ENCODE measurements at regions of chr17 and their contacts with region 1.

Region 1: DNA sequence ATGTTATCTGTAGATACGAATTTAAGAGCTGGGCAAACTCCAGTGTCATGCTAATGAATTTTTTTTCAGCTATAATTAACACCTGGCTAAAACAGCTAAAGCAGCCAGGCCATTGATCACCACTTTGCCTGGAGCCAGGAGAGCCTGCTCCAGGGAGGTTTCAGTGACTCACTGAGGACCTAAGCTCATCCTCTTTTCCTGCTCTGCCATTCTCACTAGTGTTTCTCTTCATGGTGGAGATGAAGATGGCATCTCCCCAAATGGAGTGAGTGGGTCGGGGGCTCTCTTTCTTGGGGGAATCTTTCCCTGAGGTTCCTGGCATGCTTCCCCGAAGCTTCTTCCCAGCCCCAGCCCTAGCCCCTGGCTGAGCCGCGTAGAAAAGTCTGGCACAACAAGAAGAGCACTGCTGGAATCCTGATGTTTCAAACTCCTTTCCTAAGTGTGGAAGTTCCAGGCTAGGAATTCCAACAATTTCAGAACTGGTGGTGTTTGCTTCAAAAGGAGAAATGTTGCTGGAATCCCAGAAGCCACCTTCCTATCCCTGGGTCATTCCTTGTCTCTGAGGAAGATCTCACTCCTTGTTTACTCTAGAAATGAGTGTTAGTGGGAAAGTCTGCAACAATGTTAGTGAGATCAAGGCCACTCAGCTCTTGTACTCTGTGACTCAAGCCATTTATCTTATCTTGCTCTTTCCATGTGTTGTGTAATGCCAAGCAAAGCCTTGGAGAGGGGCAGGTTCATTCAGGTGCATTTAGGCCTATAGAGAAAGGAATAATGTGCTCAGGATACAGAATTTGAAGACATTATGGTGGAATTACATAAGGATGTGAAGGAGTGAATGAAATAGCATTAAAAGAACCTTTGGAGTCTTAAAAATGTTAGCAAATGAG is 26.0 kb upstream of the B4GALNT2 start:
- DNase-seq: peak; percentile 85 to 88
- H3K4me3 ChIP-seq: no peak overlapping the region
- H3K4me3 Mint-ChIP-seq: peak overlapping the region; percentile 42
- H3K27ac Mint-ChIP-seq: peak overlapping the region; percentile 24
- H3K4me1 ChIP-seq: peaks cover 52% of the 10 kb centered on the region
- H3K4me1 Mint-ChIP-seq: peaks cover 38% of the 10 kb centered on the region
- H3K27me3 ChIP-seq: no peaks in the 10 kb centered on the region
- H3K27me3 Mint-ChIP-seq: no peaks in the 10 kb centered on the region
- CTCF ChIP-seq: no peak

Region 2: DNA sequence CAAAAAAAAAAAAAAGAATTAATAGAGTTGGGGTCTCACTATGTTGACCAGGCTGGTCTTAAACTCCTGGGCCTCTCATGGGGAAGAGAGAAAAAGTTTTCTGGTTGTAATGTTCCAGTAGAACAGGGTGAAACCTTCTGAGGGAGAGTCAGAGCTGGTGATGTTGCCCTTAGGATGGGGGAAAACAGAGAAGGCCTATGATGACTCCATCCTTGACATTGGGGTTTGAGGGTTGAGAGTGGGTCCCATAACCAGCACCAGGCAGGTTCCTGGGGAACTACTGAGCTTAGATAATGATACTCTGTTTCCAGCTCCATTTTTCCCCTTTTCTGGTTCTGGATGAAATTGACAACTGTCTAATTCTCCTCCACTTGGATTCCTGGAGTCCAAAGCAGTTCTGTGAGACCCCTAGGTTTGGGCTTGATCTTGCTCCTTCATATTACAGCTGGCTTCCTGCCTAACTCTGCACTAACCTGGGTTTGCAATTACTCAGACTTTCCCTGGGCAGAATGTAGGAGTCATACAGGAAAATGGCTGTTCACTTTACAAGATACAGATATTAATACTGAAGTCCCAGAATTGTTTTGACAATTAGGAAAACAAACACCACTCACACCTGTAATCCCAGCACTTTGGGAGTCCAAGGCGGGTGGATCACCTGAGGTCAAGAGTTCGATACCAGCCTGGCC is 36.8 kb before region 1 on chr17:
- CTCF ChIA-PET with region 1: no interaction called
- POLR2A ChIA-PET with region 1: no interaction called
- intact Hi-C with region 1: loop called (anchors 2 kb)
- DNase-seq: no peak
- H3K4me3 ChIP-seq: no peak overlapping the region
- H3K4me3 Mint-ChIP-seq: no peak overlapping the region
- H3K27ac Mint-ChIP-seq: no peak overlapping the region
- H3K4me1 ChIP-seq: peaks cover 23% of the 10 kb centered on the region
- H3K4me1 Mint-ChIP-seq: peaks cover 14% of the 10 kb centered on the region
- H3K27me3 ChIP-seq: no peaks in the 10 kb centered on the region
- H3K27me3 Mint-ChIP-seq: no peaks in the 10 kb centered on the region
- CTCF ChIP-seq: no peak

Region 3: DNA sequence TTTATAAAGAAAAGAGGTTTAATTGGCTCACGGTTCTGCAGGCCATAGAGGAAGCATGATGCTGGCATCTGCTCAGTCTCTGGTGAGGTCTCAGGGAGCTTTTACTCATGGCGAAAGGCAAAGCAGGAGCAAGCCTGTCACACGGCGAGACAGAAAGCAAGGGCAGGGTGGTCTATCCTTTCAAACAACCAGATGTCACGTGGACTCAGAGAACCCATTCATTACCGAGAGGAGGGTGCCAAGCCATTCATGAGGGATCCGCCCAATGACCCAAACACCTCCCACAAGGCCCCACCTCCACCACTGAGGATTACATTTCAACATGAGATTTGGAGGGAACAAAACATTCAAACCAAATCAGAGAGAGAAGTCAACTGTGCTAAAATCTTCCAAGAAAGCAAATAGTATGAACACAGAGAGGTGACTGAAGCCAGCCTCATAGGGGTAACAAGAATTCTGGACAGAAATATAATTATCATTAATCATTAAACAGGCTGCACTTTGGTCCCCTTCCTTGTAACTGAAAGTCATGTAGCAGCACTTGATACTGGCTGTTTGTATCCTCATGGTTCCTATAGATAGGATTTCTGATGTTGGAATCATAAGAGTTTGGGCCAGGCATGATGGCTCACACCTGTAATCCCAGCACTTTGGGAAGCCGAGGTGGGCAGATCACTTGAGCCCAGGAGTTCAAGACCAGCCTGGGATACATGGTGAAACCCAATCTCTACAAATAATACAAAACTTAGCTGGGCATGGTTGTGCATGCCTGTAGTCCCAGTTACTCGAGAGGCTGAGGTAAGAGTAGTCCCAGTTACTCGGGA is 26.5 kb before region 1 on chr17:
- CTCF ChIA-PET with region 1: no interaction called
- POLR2A ChIA-PET with region 1: no interaction called
- intact Hi-C with region 1: loop called (anchors 2 kb)
- DNase-seq: no peak
- H3K4me3 ChIP-seq: no peak overlapping the region
- H3K4me3 Mint-ChIP-seq: no peak overlapping the region
- H3K27ac Mint-ChIP-seq: peak overlapping the region; percentile 10
- H3K4me1 ChIP-seq: peaks cover 19% of the 10 kb centered on the region
- H3K4me1 Mint-ChIP-seq: peaks cover 9% of the 10 kb centered on the region
- H3K27me3 ChIP-seq: no peaks in the 10 kb centered on the region
- H3K27me3 Mint-ChIP-seq: no peaks in the 10 kb centered on the region
- CTCF ChIP-seq: no peak

Region 4: GRCh38 chr17:49121696-49122292 is 15.2 kb after region 1 on chr17:
- CTCF ChIA-PET with region 1: no interaction called
- POLR2A ChIA-PET with region 1: no interaction called
- intact Hi-C with region 1: loop called (anchors 2 kb)
- DNase-seq: peak; percentile 40 to 69
- H3K4me3 ChIP-seq: no peak overlapping the region
- H3K4me3 Mint-ChIP-seq: no peak overlapping the region
- H3K27ac Mint-ChIP-seq: peak overlapping the region; percentile 3
- H3K4me1 ChIP-seq: peaks cover 11% of the 10 kb centered on the region
- H3K4me1 Mint-ChIP-seq: peaks cover 17% of the 10 kb centered on the region
- H3K27me3 ChIP-seq: no peaks in the 10 kb centered on the region
- H3K27me3 Mint-ChIP-seq: no peaks in the 10 kb centered on the region
- CTCF ChIP-seq: no peak

Region 5: DNA sequence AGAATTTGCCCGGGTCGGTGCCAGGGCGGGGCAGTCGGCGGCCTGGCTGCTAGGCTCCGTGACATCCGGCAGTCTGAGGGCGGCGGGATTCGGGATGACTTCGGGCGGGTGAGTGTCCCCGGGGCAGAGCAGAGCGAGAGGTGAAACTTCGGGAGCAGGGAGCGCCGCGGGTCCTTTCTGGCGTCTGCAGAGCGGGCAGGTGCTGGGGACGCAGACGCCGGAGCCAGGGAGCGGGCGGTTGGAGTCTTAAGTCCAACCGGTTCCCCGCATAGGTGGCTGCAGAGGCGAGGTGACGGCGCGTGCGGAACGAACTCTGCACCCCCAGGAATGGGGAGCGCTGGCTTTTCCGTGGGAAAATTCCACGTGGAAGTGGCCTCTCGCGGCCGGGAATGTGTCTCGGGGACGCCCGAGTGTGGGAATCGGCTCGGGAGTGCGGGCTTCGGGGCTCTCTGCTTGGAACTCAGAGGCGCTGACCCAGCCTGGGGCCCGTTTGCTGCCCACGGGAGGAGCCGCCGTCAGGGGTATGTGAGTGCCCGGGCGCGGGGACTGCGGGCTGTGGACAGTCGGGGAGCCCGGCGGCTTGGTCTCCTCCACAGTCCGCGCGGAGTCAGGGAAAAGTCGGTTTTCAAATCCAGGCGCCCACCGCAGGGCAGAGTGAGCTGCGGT is 26.3 kb after region 1 on chr17 and contains the start of gene B4GALNT2:
- CTCF ChIA-PET with region 1: no interaction called
- POLR2A ChIA-PET with region 1: no interaction called
- intact Hi-C with region 1: loop called (anchors 2 kb)
- DNase-seq: peak; percentile 79
- H3K4me3 ChIP-seq: peak within 1 kb of the TSS; percentile 58
- H3K4me3 Mint-ChIP-seq: peak within 1 kb of the TSS; percentile 84
- H3K27ac Mint-ChIP-seq: peak within 1 kb of the TSS; percentile 50
- H3K4me1 ChIP-seq: peaks cover 6% of the 10 kb centered on the region; the same call in 1 of the 2 replicates
- H3K4me1 Mint-ChIP-seq: peaks cover 8% of the 10 kb centered on the region
- H3K27me3 ChIP-seq: peaks cover 2% of the 10 kb centered on the region; the same call in 1 of the 2 replicates
- H3K27me3 Mint-ChIP-seq: no peaks in the 10 kb centered on the region
- CTCF ChIP-seq: no peak
- total RNA-seq, gene B4GALNT2: 1.1 and 1.3 TPM in 2 replicates

Region 6: GRCh38 chr17:49191917-49192741 is 85.6 kb after region 1 on chr17:
- CTCF ChIA-PET with region 1: interaction called, 4 read pairs
- POLR2A ChIA-PET with region 1: no interaction called
- intact Hi-C with region 1: loop called (anchors 1 kb)
- DNase-seq: peak; percentile 92 to 99
- H3K4me3 ChIP-seq: peak overlapping the region; percentile 72
- H3K4me3 Mint-ChIP-seq: peak overlapping the region; percentile 73
- H3K27ac Mint-ChIP-seq: peak overlapping the region; percentile 95
- H3K4me1 ChIP-seq: no peaks in the 10 kb centered on the region; the same call in 1 of the 2 replicates
- H3K4me1 Mint-ChIP-seq: peaks cover 14% of the 10 kb centered on the region
- H3K27me3 ChIP-seq: no peaks in the 10 kb centered on the region
- H3K27me3 Mint-ChIP-seq: no peaks in the 10 kb centered on the region
- CTCF ChIP-seq: peak; percentile 44 to 69

Region 7: GRCh38 chr17:49210158-49211029 is 103.8 kb after region 1 on chr17 and contains the starts of genes ABI3 and GNGT2:
- CTCF ChIA-PET with region 1: no interaction called
- POLR2A ChIA-PET with region 1: no interaction called
- intact Hi-C with region 1: no loop called
- DNase-seq: peak in 1 of 2 experiments; percentile 44
- H3K4me3 ChIP-seq: no peak within 1 kb of the TSS
- H3K4me3 Mint-ChIP-seq: no peak within 1 kb of the TSS
- H3K27ac Mint-ChIP-seq: no peak within 1 kb of the TSS
- H3K4me1 ChIP-seq: no peaks in the 10 kb centered on the region
- H3K4me1 Mint-ChIP-seq: no peaks in the 10 kb centered on the region
- H3K27me3 ChIP-seq: no peaks in the 10 kb centered on the region
- H3K27me3 Mint-ChIP-seq: peaks cover 7% of the 10 kb centered on the region
- CTCF ChIP-seq: no peak
- total RNA-seq, gene ABI3: not detected in 2 replicates
- total RNA-seq, gene GNGT2: not detected in 2 replicates

Measured in Caco-2 (cell line).